ENCODE measurements at regions of chr1 and their contacts with region 1.

Region 1: DNA sequence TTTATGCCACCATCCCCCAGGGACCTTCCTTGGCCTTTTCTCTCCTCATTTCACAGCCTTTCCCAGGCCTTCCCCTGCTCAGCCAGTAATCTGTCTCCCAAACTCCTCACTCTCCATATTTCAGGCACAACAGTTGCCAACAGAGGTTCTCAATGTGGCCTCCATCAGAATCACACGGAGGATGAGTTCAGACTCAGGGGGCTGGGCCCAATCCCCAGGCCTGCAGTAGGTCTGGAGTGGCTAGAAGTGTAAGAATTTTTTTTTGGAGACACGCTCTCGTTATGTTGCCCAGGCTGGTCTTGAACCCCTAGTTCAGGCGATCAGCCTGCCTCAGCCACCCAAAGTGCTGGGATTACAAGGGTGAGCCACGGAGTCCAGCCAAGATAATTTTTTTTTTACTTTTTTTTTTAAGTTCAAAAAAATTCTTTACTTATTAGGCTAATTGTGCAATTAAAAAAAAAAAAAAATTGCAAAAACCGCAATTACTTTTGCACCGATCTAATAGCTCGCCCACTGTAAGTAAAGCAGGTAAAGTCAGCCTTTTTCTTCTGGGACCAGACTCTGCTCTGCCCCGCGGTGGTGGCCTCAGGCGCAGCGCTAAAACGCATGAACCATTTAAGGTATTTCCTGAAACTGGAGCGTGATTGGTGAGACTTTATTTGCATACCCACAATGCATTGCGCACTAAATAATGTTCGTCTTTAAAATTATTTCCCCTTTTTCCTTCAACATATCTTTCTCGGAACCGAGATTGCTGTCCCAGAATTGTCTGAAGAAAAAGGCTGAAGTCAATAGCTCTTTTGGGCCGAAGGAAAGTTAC is 18.7 kb downstream of the KIAA2013 start:
- DNase-seq: peak; percentile 82
- H3K4me3 Mint-ChIP-seq: peak overlapping the region; percentile 78
- H3K27ac Mint-ChIP-seq: peak overlapping the region; percentile 100
- H3K4me1 Mint-ChIP-seq: no peaks in the 10 kb centered on the region
- H3K27me3 Mint-ChIP-seq: no peaks in the 10 kb centered on the region
- CTCF ChIP-seq: no peak

Region 2: DNA sequence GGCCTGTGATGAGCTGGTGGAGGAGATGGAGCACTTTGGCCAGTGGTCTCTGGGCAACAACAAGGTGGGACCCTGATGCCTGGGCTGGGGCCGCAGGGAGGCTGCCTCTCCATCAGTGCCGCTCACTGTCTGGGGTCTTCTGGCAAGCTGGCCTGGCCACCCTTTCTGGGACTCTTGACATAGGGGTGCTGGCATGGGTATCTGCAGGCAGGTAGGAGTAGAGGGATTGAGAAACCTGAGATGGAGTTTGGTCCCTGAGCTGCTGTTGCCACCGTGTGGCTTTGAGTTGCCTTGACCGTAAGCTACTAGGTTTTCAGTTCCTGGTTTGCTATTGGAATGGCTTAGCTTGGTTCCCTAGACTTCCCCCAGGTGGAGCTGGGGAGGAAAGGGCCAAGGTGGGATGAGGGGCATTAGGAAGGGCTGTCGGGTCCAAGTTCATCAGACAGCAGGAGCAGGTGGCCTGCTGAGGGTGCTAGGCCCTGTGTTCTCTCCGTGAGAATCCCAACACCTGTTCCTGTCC is 59.6 kb after region 1 on chr1:
- CTCF ChIA-PET with region 1: interaction called, 9 read pairs
- intact Hi-C with region 1: loop called (anchors 2 kb)
- DNase-seq: peak; percentile 46
- H3K4me3 Mint-ChIP-seq: no peak overlapping the region
- H3K27ac Mint-ChIP-seq: no peak overlapping the region
- H3K4me1 Mint-ChIP-seq: no peaks in the 10 kb centered on the region
- H3K27me3 Mint-ChIP-seq: no peaks in the 10 kb centered on the region
- CTCF ChIP-seq: peak; percentile 49

Region 3: GRCh38 chr1:12196641-12197482 is 289.4 kb after region 1 on chr1:
- CTCF ChIA-PET with region 1: no interaction called
- intact Hi-C with region 1: no loop called
- DNase-seq: no peak
- H3K4me3 Mint-ChIP-seq: no peak overlapping the region
- H3K27ac Mint-ChIP-seq: no peak overlapping the region
- H3K4me1 Mint-ChIP-seq: no peaks in the 10 kb centered on the region
- H3K27me3 Mint-ChIP-seq: no peaks in the 10 kb centered on the region
- CTCF ChIP-seq: no peak

Measured in Calu3 (cell line).